ENCODE measurements at regions of chr6 and their contacts with region 1.

Region 1: GRCh38 chr6:145508107-145508506 is 227.2 kb downstream of the EPM2A start:
- DNase-seq: peak; percentile 3
- H3K4me3 Mint-ChIP-seq: no peak overlapping the region
- H3K27ac Mint-ChIP-seq: no peak overlapping the region
- H3K4me1 Mint-ChIP-seq: peaks cover 14% of the 10 kb centered on the region
- H3K27me3 Mint-ChIP-seq: no peaks in the 10 kb centered on the region
- CTCF ChIP-seq: peak; percentile 8

Region 2: GRCh38 chr6:145483191-145483996 is 24.7 kb before region 1 on chr6:
- CTCF ChIA-PET with region 1: no interaction called
- POLR2A ChIA-PET with region 1: interaction called, 10 read pairs
- intact Hi-C with region 1: no loop called
- DNase-seq: peak; percentile 71
- H3K4me3 Mint-ChIP-seq: no peak overlapping the region
- H3K27ac Mint-ChIP-seq: peak overlapping the region; percentile 10
- H3K4me1 Mint-ChIP-seq: peaks cover 10% of the 10 kb centered on the region
- H3K27me3 Mint-ChIP-seq: no peaks in the 10 kb centered on the region
- CTCF ChIP-seq: no peak